Activated CD4-positive, alpha-beta T cell treated with anti-CD3 and anti-CD28 coated beads, Interleukin-2, amount 10 ng/mL, durations not matched to agents 24 days and 14 days (primary cell): ENCODE measurements at regions of chr3 and their contacts with region 1.

Region 1: DNA sequence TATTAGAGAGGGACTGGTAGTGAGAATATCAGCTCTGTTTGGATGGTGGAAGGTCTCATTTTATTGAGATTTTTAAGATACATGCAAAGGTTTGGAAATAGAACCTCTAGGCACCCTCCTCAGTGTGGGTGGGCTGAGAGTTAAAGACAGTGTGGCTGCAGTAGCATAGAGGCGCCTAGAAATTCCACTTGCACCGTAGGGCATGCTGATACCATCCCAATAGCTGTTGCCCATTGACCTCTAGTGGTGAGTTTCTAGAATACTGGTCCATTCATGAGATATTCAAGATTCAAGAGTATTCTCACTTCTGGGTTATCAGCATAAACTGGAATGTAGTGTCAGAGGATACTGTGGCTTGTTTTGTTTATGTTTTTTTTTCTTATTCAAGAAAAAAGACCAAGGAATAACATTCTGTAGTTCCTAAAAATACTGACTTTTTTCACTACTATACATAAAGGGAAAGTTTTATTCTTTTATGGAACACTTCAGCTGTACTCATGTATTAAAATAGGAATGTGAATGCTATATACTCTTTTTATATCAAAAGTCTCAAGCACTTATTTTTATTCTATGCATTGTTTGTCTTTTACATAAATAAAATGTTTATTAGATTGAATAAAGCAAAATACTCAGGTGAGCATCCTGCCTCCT is 87.2 kb downstream of the TGFBR2 start:
- DNase-seq: peak; percentile 83
- H3K4me3 Mint-ChIP-seq: no peak overlapping the region
- H3K27ac Mint-ChIP-seq: peak overlapping the region; percentile 27
- H3K4me1 Mint-ChIP-seq: peaks cover 35% of the 10 kb centered on the region
- H3K27me3 Mint-ChIP-seq: no peaks in the 10 kb centered on the region

Region 2: GRCh38 chr3:30012941-30013543 is 680.6 kb before region 1 on chr3:
- intact Hi-C with region 1: loop called (anchors 10 kb)
- DNase-seq: peak; percentile 79
- H3K4me3 Mint-ChIP-seq: no peak overlapping the region
- H3K27ac Mint-ChIP-seq: no peak overlapping the region
- H3K4me1 Mint-ChIP-seq: peaks cover 3% of the 10 kb centered on the region
- H3K27me3 Mint-ChIP-seq: peaks cover 7% of the 10 kb centered on the region

Region 3: DNA sequence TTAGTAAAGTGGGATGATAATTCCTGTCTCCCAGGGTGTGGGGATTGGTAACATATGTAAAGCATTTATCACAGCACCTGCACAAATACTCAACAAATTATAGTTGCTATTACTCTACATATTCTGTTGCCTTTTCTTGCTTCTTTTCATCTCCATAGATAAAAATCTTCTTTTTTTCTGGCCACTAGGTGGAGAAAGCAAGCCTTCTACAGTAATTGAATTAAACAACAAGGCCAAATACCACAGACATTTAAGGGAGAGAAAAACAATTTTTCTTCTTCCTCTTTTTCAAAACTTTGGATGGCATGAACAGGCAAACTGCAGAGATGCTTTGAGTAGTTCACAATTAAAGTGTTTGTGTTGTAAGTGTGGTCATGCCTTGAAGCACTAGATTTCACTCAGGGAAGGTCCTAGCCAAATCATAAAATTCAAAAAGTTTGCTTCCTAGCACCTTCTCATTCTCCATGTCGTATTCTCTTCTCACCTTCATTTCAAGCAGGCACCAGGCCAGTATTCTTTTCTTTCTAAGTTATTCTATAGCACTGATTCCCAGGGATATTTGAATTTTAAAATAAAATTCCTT is 580.6 kb before region 1 on chr3:
- intact Hi-C with region 1: loop called (anchors 1 kb)
- DNase-seq: peak; percentile 58
- H3K4me3 Mint-ChIP-seq: no peak overlapping the region
- H3K27ac Mint-ChIP-seq: no peak overlapping the region
- H3K4me1 Mint-ChIP-seq: peaks cover 3% of the 10 kb centered on the region
- H3K27me3 Mint-ChIP-seq: peaks cover 17% of the 10 kb centered on the region

Region 4: DNA sequence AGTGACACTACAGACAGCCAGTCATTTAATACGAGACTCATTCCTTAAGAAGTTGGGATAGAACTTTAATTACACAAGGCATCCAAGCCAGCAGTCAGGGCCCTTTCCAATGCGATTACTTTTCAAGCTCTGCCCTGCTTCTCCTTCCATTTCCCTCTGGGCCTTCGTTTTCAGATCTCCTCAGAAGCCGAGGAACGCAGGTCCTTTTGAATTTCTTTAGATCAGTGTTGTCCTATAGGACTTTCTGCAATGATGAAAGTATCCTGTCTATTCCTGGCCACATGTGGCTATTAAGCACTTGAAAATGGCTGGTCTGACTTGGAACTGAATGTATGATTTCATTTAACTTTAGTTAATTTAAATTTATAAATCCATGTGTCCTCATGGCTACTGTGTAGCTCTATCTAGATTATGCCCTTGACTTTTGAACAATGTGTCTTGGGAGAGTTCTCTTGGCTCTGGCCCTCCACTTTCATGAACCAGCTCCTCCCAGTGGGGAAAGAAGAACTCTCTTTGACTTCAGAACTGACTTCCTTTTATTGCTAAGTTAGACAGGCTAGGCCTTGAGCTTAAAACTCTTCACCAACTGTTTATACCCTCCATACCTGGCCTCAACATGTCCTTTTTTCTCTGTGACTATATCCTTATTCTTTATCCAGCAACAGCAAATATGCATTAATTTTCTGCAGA is 64.5 kb before region 1 on chr3:
- intact Hi-C with region 1: no loop called
- DNase-seq: peak; percentile 80
- H3K4me3 Mint-ChIP-seq: peak overlapping the region; percentile 57
- H3K27ac Mint-ChIP-seq: peak overlapping the region; percentile 99
- H3K4me1 Mint-ChIP-seq: peaks cover 76% of the 10 kb centered on the region
- H3K27me3 Mint-ChIP-seq: no peaks in the 10 kb centered on the region

Region 5: GRCh38 chr3:30644593-30645012 is 49.0 kb before region 1 on chr3:
- intact Hi-C with region 1: loop called (anchors 2 kb)
- DNase-seq: peak; percentile 89
- H3K4me3 Mint-ChIP-seq: peak overlapping the region; percentile 61
- H3K27ac Mint-ChIP-seq: peak overlapping the region; percentile 93
- H3K4me1 Mint-ChIP-seq: peaks cover 78% of the 10 kb centered on the region
- H3K27me3 Mint-ChIP-seq: no peaks in the 10 kb centered on the region

Region 6: GRCh38 chr3:30680789-30681642 is 12.6 kb before region 1 on chr3:
- intact Hi-C with region 1: no loop called
- DNase-seq: peak; percentile 59
- H3K4me3 Mint-ChIP-seq: peak overlapping the region; percentile 66
- H3K27ac Mint-ChIP-seq: peak overlapping the region; percentile 68
- H3K4me1 Mint-ChIP-seq: peaks cover 80% of the 10 kb centered on the region
- H3K27me3 Mint-ChIP-seq: no peaks in the 10 kb centered on the region

Region 7: GRCh38 chr3:30751610-30752299 is 58.2 kb after region 1 on chr3:
- intact Hi-C with region 1: loop called (anchors 5 kb)
- DNase-seq: peak; percentile 83
- H3K4me3 Mint-ChIP-seq: no peak overlapping the region
- H3K27ac Mint-ChIP-seq: no peak overlapping the region
- H3K4me1 Mint-ChIP-seq: peaks cover 36% of the 10 kb centered on the region
- H3K27me3 Mint-ChIP-seq: no peaks in the 10 kb centered on the region